T-cell (primary cell): ENCODE measurements at regions of chr14 and their contacts with region 1.

Region 1: DNA sequence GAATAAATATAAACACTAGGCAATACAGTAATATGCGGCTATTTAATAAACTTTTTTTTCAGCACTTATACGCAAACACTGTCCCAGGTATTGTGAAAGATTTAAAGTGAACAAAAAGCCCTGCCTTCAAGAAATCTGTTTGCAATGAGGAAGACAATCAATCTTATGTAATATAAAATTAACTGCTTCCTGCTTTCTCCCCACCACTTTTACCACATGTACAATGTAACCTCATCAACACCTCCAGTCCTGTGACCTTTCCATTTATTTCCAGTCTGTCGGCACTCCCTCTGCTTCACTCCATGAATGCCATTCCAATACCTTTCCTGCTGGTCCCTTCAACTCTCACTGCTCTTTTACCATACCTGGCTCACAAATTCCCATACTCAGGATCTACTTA is 10.5 kb downstream of the SNX6 start:
- DNase-seq: no peak
- ATAC-seq: no peak
- H3K4me3 ChIP-seq: no peak overlapping the region
- H3K4me3 Mint-ChIP-seq: no peak overlapping the region
- H3K27ac ChIP-seq: no peak overlapping the region
- H3K27ac Mint-ChIP-seq: peak overlapping the region in 1 of 2 donors; percentile 62
- H3K4me1 ChIP-seq: peaks cover 0 to 22% of the 10 kb centered on the region in 2 experiments
- H3K4me1 Mint-ChIP-seq: peaks cover 57 to 63% (median 63%) of the 10 kb centered on the region in 3 donors
- H3K27me3 ChIP-seq: no peaks in the 10 kb centered on the region
- H3K27me3 Mint-ChIP-seq: no peaks in the 10 kb centered on the region

Region 2: GRCh38 chr14:34596891-34597290 is 22.6 kb before region 1 on chr14:
- CTCF ChIA-PET with region 1: interaction called in 1 of 2 experiments, 18 read pairs
- POLR2A ChIA-PET with region 1: no interaction called
- DNase-seq: no peak
- ATAC-seq: no peak
- H3K4me3 ChIP-seq: no peak overlapping the region
- H3K4me3 Mint-ChIP-seq: no peak overlapping the region
- H3K27ac ChIP-seq: no peak overlapping the region
- H3K27ac Mint-ChIP-seq: no peak overlapping the region
- H3K4me1 ChIP-seq: no peaks in the 10 kb centered on the region
- H3K4me1 Mint-ChIP-seq: peaks cover 0 to 4% (median 2%) of the 10 kb centered on the region in 3 donors
- H3K27me3 ChIP-seq: no peaks in the 10 kb centered on the region
- H3K27me3 Mint-ChIP-seq: no peaks in the 10 kb centered on the region

Region 3: GRCh38 chr14:34629657-34630529 is 10.4 kb after region 1 on chr14 and contains the start of gene SNX6:
- CTCF ChIA-PET with region 1: no interaction called
- POLR2A ChIA-PET with region 1: no interaction called
- DNase-seq: peak; percentile 71 to 92 (median 78)
- ATAC-seq: peak; percentile 95 to 98 (median 96)
- H3K4me3 ChIP-seq: peak within 1 kb of the TSS; percentile 93 to 96
- H3K4me3 Mint-ChIP-seq: peak within 1 kb of the TSS; percentile 86 to 98 (median 94)
- H3K27ac ChIP-seq: peak within 1 kb of the TSS; percentile 93
- H3K27ac Mint-ChIP-seq: peak within 1 kb of the TSS; percentile 93 to 94
- H3K4me1 ChIP-seq: peaks cover 7 to 26% of the 10 kb centered on the region in 2 experiments
- H3K4me1 Mint-ChIP-seq: peaks cover 21 to 36% (median 34%) of the 10 kb centered on the region in 3 donors
- H3K27me3 ChIP-seq: no peaks in the 10 kb centered on the region
- H3K27me3 Mint-ChIP-seq: peaks cover 0 to 3% of the 10 kb centered on the region in 2 donors
- total RNA-seq, gene SNX6: 63.4 to 69.1 (median 64.6) TPM

Region 4: GRCh38 chr14:34650421-34651216 is 31.1 kb after region 1 on chr14:
- CTCF ChIA-PET with region 1: no interaction called
- POLR2A ChIA-PET with region 1: no interaction called
- DNase-seq: no peak
- ATAC-seq: no peak
- H3K4me3 ChIP-seq: no peak overlapping the region
- H3K4me3 Mint-ChIP-seq: no peak overlapping the region
- H3K27ac ChIP-seq: no peak overlapping the region
- H3K27ac Mint-ChIP-seq: no peak overlapping the region
- H3K4me1 ChIP-seq: no peaks in the 10 kb centered on the region
- H3K4me1 Mint-ChIP-seq: no peaks in the 10 kb centered on the region
- H3K27me3 ChIP-seq: peaks cover 0 to under 1% of the 10 kb centered on the region in 2 experiments
- H3K27me3 Mint-ChIP-seq: no peaks in the 10 kb centered on the region